GM12878 (cell line): ENCODE measurements at regions of chr5 and their contacts with region 1.

Region 1: DNA sequence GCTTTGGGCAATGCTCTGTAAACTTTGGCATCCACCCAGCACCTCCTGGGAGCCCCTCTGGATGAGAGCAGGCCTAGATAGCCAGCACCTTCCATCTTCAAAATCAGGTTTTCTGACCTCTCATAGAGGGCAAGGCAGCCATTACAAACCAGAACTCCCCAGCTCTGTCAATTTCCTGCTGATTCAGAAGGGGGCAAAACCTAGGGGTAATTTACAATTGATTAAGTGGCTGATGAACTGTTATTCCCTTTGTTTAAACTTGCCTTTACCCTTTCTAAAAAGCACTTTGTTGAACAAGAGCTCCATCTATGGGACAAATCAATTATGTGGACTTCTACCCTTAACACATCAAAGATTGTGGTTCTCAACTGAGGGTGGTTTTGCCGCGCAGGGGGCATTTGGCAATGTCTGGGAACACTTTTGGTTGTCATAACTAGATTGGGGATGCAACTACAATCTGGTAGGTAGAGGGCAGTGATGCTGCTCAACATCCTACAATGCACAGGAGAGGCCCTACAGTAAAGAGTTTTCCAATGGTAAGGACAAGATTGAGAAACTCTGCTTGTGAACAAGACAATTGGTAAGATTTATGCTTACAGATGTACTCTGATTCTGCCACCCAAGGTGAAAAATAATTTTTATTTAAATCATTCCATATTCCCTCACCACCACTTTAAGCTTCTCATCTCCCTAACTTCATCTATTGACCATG is 184.1 kb downstream of the MARCHF11 start:
- DNase-seq: no peak
- ATAC-seq: peak; percentile 85
- H3K4me3 ChIP-seq: no peak overlapping the region
- H3K27ac ChIP-seq: no peak overlapping the region
- H3K4me1 ChIP-seq: no peaks in the 10 kb centered on the region
- H3K27me3 ChIP-seq: no peaks in the 10 kb centered on the region
- CTCF ChIP-seq: peak in 2 of 3 experiments; percentile 6 to 34; a peak in 1 of 6 replicates
- EP300 ChIP-seq: no peak
- POLR2A ChIP-seq: no peak
- RAD21 ChIP-seq: no peak

Region 2: DNA sequence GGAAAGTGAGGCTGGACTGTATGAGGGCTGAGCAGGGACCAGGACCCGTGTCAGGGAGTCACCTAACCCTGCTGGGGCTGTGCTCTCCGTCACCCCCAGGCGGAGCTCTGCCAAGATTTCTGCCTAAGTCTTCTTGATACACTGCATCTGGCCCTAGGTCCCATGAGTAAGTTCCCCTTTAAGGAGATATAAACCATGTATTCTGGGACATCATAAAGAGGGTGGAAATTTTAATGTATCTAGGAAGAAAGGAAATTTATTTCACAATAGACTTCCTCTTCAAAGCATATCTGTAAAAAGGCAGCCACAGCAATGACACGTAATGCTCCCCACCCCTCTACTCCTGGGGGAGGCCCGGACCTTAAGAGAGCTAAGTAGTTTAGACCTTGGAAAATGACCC is 312.2 kb before region 1 on chr5:
- CTCF ChIA-PET with region 1: no interaction called
- POLR2A ChIA-PET with region 1: no interaction called
- RAD21 ChIA-PET with region 1: no interaction called
- SMC1A ChIA-PET with region 1: no interaction called
- in situ Hi-C with region 1: no loop called
- intact Hi-C with region 1: loop called (anchors 10 kb)
- DNase-seq: no peak
- ATAC-seq: peak; percentile 70
- H3K4me3 ChIP-seq: no peak overlapping the region
- H3K27ac ChIP-seq: no peak overlapping the region
- H3K4me1 ChIP-seq: no peaks in the 10 kb centered on the region
- H3K27me3 ChIP-seq: no peaks in the 10 kb centered on the region
- CTCF ChIP-seq: peak in 2 of 3 experiments; percentile 10 to 34; a peak in 2 of 6 replicates
- EP300 ChIP-seq: no peak
- POLR2A ChIP-seq: no peak
- RAD21 ChIP-seq: peak; percentile 28; the same call in 1 of the 2 replicates